ENCODE measurements at regions of chr10 and their contacts with region 1.

Region 1: DNA sequence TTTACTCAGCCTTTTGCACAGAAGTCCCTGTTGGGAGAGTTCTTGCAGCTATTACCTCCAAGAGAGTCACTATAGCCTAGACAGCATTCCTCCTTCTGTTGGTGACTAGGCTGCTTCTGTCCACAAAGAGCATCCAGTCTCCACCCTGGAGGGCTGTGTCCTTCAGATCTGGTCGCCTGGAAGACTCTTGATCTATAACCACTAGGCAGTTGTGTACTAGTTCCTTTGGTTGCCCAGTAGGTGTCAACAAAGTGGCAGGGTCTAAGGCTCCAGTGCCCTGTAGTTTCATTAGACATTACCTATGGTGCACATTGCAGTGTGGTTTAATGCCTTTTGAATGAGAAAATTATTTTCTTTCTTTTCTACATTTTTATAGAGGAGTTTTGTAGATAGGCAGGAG is 11.3 kb upstream of the AKR1C2 start:
- DNase-seq: no peak
- ATAC-seq: peak; percentile 80

Region 2: DNA sequence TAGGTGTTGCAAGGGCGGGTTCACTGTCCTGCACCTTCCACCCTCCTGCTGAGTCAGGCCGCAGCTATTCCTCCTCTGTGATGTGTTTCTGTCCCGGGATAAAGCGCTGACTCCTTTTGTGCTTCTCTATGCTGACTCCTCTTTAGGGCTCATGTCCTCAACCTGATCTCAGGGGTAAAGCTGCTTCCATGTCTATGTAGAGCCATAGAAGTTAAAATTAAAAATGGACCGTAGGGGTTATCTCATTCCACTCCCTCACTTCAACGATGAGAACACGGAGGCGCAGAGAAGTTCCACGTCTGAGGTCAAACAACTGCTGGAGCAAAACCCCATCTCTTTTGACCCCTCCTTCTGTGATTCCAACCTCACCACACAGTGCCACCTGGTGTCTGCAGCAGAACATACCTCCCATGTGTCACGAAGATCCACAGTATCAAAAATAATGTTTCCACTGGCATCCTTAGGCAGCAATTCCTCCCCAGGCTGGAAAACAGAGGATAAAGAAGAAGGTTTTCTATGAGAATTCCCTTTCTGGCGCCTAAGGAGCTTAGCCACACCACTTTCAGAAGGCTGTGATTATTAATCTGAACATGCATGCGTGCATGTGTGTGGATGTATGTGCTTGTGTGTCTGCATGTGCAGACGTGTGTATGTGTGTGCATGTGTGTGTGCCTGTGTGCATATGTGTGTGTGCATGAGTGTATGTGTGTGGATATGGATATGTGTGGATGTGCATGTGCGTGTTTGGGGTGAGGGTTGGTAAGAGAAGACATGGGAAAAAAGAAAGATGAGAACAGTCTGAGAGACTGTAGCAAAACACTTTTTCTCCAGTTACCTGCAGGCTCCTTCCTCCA is 268.6 kb after region 1 on chr10:
- intact Hi-C with region 1: loop called in 1 of 2 experiments (anchors 10 kb)
- DNase-seq: peak; percentile 56 to 74
- ATAC-seq: peak; percentile 97

Measured in left colon (tissue), 2 donors.